Posterior cingulate gyrus (tissue), 11 donors: ENCODE measurements at regions of chr12 and their contacts with region 1.

Region 1: DNA sequence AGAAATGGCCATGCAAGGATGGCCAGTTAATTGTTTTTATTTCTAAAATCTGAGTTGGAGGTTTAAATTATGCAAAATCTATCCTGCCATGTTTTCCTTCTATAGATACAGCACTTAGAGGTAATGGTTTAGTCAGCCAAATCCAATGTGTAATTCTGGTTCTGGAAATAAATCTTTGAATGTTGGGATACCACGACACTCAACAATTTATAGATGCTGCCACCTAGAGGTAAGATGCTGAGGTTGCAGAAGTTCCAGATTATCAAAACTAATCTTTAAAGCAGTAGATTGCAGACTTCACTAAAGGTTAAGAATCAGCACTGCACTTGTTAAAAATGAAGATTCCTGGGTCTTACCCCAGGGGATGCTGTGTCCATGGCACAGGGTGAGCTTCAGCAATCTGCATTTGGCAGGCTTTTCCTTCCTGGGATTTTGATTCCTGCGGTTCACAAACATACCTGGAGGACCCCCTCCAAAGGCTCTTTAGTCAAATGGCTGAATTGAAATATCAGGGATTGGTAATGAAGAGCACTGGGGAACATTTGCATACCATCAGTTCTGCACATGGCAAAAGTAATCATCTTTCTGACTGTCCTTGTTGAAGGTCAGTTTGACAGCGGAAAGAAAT is 53.4 kb upstream of the ANO4 start:
- DNase-seq: no peak

Region 2: GRCh38 chr12:100668945-100669536 is 72.2 kb before region 1 on chr12:
- intact Hi-C with region 1: loop called (anchors 2 kb)
- DNase-seq: peak; percentile 51 to 96 (median 78)

Region 3: DNA sequence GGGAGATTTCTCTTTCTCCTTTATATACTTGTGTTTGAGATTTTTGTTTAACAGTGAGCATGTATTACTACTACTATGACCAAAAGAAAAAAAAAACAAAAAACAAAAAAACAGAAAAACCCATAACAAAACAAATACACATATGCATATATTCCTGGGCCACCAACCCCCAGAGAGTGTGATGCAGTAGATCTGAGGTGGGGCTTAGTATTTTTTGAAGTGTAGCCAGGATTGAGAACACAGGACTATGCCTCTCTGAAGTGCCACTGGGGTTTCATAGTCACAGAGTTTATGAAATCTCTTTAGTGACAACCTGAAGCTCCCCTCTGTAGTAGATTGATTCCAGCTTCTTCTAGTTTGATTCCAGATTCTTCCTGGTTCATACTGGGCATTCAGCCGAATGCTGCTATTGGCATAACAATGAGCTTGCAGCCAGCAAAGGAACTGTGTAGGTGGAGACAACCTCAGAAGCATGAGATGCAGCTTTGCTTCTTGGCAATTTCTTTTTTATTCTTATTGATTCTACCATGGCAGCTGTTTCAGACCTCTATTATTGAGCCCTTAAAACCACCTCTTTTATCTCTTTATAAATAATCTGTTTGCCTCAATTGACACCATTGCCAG is 37.9 kb after region 1 on chr12:
- intact Hi-C with region 1: no loop called
- DNase-seq: no peak

Region 4: GRCh38 chr12:100842156-100842555 is 101.0 kb after region 1 on chr12:
- intact Hi-C with region 1: no loop called
- DNase-seq: no peak

Region 5: GRCh38 chr12:100951756-100952155 is 210.6 kb after region 1 on chr12:
- intact Hi-C with region 1: no loop called
- DNase-seq: no peak